PC-3 (cell line): ENCODE measurements at regions of chr14 and their contacts with region 1.

Region 1: GRCh38 chr14:53533384-53533970 is 380.4 kb upstream of the DDHD1 start:
- DNase-seq: no peak
- ATAC-seq: no peak
- H3K4me3 ChIP-seq: no peak overlapping the region
- H3K27ac ChIP-seq: peak overlapping the region; percentile 94
- H3K4me1 ChIP-seq: peaks cover 35% of the 10 kb centered on the region
- H3K27me3 ChIP-seq: no peaks in the 10 kb centered on the region
- CTCF ChIP-seq: no peak

Region 2: DNA sequence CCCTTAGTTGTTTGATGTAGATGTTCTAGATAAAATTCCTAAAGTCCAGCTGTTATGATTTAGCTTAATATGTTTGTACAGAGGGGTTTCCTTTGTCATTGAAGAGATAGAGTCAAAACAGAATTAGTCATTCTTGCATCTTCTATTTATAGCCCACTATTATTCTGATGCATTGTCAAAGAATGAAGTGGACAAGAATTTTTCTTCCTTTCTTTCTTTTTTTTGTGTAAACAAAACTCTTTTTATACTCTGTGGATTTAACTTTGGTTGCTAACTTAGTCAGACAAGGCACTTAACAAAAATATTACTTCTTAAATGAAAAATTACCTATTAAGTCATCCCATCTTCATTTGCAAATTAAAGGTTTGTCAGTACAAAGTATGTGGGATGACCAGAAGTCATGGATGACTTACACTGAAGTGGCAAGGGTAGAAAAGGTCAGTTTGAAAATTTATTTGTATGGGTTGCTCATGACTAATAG is 164.7 kb before region 1 on chr14:
- CTCF ChIA-PET with region 1: no interaction called
- POLR2A ChIA-PET with region 1: no interaction called
- intact Hi-C with region 1: loop called (anchors 2 kb)
- DNase-seq: peak; percentile 70
- ATAC-seq: peak; percentile 81
- H3K4me3 ChIP-seq: no peak overlapping the region
- H3K27ac ChIP-seq: peak overlapping the region; percentile 14; the same call in 1 of the 2 replicates
- H3K4me1 ChIP-seq: peaks cover 35% of the 10 kb centered on the region
- H3K27me3 ChIP-seq: no peaks in the 10 kb centered on the region
- CTCF ChIP-seq: no peak

Region 3: GRCh38 chr14:53450871-53451270 is 82.6 kb before region 1 on chr14:
- CTCF ChIA-PET with region 1: no interaction called
- POLR2A ChIA-PET with region 1: interaction called, 4 read pairs
- intact Hi-C with region 1: loop called (anchors 2 kb)
- DNase-seq: peak; percentile 66
- ATAC-seq: peak; percentile 96
- H3K4me3 ChIP-seq: no peak overlapping the region
- H3K27ac ChIP-seq: peak overlapping the region; percentile 13; the same call in 1 of the 2 replicates
- H3K4me1 ChIP-seq: peaks cover 10% of the 10 kb centered on the region
- H3K27me3 ChIP-seq: no peaks in the 10 kb centered on the region
- CTCF ChIP-seq: no peak

Region 4: GRCh38 chr14:53491256-53491883 is 42.1 kb before region 1 on chr14:
- CTCF ChIA-PET with region 1: no interaction called
- POLR2A ChIA-PET with region 1: no interaction called
- intact Hi-C with region 1: loop called (anchors 2 kb)
- DNase-seq: peak; percentile 21
- ATAC-seq: peak; percentile 67
- H3K4me3 ChIP-seq: no peak overlapping the region
- H3K27ac ChIP-seq: no peak overlapping the region
- H3K4me1 ChIP-seq: no peaks in the 10 kb centered on the region
- H3K27me3 ChIP-seq: no peaks in the 10 kb centered on the region
- CTCF ChIP-seq: no peak

Region 5: GRCh38 chr14:53516261-53516774 is 17.2 kb before region 1 on chr14:
- CTCF ChIA-PET with region 1: no interaction called
- POLR2A ChIA-PET with region 1: no interaction called
- intact Hi-C with region 1: no loop called
- DNase-seq: no peak
- ATAC-seq: 0 out of 2 replicates have a peak, but pooled peaks have one; percentile 13
- H3K4me3 ChIP-seq: no peak overlapping the region
- H3K27ac ChIP-seq: no peak overlapping the region
- H3K4me1 ChIP-seq: no peaks in the 10 kb centered on the region
- H3K27me3 ChIP-seq: no peaks in the 10 kb centered on the region
- CTCF ChIP-seq: no peak